ENCODE measurements at regions of chr3 and their contacts with region 1.

Region 1: DNA sequence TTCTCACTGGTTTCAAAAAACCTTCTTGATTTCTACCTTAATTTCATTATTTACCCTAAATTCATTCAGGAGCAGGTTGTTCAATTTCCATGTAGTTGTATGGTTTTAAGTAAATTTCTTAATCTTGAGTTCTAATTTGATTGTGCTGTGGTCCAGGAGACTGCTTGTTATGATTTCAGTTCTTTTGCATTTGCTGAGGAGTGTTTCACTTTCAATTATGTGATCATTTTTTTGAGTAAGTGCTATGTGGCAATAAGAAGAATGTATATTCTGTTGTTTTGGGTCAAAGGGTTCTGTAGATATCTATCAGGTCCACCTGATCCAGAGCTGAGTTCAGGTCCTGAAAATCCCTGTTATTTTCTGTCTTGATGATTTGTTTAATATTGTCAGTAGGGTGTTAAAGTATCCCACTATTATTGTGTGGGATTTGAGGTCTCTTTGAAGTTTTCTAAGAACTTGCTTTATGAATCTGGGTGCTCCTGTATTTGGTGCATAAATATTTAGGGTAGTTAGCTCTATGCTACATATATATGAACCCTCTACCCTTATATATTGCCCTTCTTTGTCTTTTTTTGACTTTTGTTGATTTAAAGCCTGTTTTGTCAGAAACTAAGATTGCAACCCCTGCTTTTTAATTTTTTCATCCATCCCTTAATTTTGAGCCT is 158.4 kb upstream of the TPRG1 start:
- DNase-seq: no peak
- H3K4me3 Mint-ChIP-seq: no peak overlapping the region
- H3K27ac Mint-ChIP-seq: peak overlapping the region; percentile 25
- H3K4me1 Mint-ChIP-seq: peaks cover 21% of the 10 kb centered on the region
- H3K27me3 Mint-ChIP-seq: peaks cover 15% of the 10 kb centered on the region

Region 2: DNA sequence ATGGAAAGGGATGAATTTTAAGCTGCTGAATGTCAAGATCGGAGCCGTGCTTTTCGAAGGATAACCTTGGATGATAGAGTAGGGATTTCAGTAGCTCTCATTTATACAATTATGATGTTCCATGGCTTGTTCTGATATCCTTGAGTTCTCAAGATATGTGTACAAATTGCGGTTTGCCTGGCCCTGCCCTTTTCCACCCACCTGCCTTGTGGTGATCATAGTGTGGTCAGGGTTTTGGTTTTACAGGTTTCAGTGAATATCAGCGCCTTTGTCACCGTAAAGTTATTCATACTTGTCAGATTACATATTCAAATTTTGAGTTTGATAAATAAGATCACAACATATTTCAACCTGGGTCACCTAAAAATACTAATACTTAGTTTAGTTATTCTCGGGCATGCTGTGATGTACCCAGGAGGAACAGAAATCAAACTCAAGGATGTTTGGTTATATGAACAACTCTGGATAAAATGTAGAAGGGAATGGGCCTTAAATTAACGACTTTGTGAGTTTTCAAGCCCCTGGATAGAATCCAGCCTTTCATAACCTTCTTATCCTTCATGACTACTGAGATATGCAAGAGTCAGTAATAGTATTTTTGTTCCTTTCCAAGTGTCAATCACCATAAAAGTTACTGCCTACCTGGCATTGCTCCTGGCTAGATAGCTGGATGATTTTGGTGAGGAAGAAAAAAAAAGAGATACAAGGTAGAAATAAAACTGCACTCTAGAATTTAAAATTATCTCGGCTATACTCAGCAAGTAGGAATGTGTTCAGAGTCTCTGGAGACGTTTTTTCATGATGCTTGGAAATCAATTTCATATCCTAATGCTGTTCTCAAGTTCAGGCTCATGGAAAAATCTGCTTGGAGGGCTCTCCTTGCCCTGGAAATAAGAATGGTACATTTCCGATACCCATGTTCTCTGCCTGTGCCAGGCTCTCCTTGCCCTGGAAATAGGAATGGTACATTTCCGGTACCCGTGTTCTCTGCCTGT is 50.8 kb before region 1 on chr3:
- intact Hi-C with region 1: no loop called
- DNase-seq: no peak
- H3K4me3 Mint-ChIP-seq: no peak overlapping the region
- H3K27ac Mint-ChIP-seq: no peak overlapping the region
- H3K4me1 Mint-ChIP-seq: peaks cover 12% of the 10 kb centered on the region
- H3K27me3 Mint-ChIP-seq: peaks cover 40% of the 10 kb centered on the region

Region 3: DNA sequence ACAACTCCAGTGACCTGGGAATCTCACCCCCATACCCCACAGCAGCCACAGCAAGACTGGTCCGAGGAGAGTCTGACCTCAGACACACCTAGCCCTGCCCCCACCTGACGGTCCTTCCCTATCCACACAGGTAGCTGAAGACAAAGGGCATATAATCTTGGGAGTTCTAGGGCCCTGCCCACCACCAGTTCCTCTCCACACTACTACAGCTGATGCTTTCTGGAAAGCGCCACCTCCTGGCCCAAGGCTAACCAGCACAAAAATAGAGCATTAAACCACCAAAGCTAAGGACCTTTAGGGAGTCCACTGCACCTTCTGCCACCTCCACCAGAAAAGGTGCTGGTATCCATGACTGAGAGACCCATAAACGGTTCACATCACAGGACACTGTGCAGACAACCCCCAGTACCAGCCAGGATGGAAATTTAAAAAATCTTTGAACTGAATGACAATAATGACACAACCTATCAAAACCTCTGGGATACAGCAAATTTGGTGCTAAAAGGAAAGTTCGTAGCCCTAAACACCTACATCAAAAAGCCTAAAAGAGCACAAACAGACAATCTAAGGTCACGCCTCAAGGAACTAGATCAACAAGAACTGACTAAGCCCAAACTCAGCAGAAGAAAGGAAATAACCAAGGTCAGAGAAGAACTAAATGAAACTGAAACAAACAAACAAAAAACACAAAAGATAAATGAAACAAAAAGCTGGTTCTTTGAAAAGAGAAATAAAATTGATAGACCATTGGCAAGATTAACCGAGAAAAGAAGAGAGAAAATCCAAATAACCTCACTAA is 36.3 kb after region 1 on chr3:
- intact Hi-C with region 1: loop called (anchors 5 kb)
- DNase-seq: peak; percentile 73
- H3K4me3 Mint-ChIP-seq: peak overlapping the region; percentile 67
- H3K27ac Mint-ChIP-seq: peak overlapping the region; percentile 89
- H3K4me1 Mint-ChIP-seq: peaks cover 46% of the 10 kb centered on the region
- H3K27me3 Mint-ChIP-seq: peaks cover 2% of the 10 kb centered on the region